ENCODE measurements at regions of chr1 and their contacts with region 1.

Region 1: GRCh38 chr1:162035241-162035640 is 11.6 kb upstream of the OLFML2B start:
- DNase-seq: peak in 2 of 3 donors; percentile 9 to 28
- H3K4me3 ChIP-seq: no peak overlapping the region
- H3K27ac ChIP-seq: no peak overlapping the region
- H3K4me1 ChIP-seq: peaks cover 0 to 8% (median 3%) of the 10 kb centered on the region in 4 experiments
- H3K27me3 ChIP-seq: no peaks in the 10 kb centered on the region

Region 2: GRCh38 chr1:161792740-161793139 is 242.5 kb before region 1 on chr1:
- CTCF ChIA-PET with region 1: interaction called, 144 read pairs
- POLR2A ChIA-PET with region 1: no interaction called
- DNase-seq: peak; percentile 54 to 75 (median 72)
- H3K4me3 ChIP-seq: no peak overlapping the region
- H3K27ac ChIP-seq: no peak overlapping the region
- H3K4me1 ChIP-seq: no peaks in the 10 kb centered on the region
- H3K27me3 ChIP-seq: no peaks in the 10 kb centered on the region

Region 3: GRCh38 chr1:161858271-161858670 is 177.0 kb before region 1 on chr1:
- CTCF ChIA-PET with region 1: interaction called, 35 read pairs
- POLR2A ChIA-PET with region 1: no interaction called
- DNase-seq: no peak
- H3K4me3 ChIP-seq: no peak overlapping the region
- H3K27ac ChIP-seq: no peak overlapping the region
- H3K4me1 ChIP-seq: no peaks in the 10 kb centered on the region
- H3K27me3 ChIP-seq: no peaks in the 10 kb centered on the region

Region 4: DNA sequence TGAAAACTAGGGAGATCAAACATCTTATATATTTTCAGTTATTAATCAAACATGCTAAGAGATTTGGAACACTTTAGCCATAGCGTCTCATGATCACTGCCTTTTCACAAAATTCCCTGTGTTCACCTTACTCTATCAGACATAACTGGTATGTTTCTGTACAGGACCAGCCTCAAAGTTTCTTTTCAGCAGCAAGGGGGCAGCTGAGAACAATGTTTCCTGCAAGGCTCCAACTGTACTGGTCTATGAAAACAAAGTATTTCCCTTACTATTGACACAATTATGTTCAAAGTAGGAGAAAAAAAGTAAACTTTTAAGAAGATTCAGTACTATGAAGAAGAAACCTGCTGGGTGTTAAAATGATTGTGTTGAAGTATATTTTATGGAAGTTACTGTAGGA is 170.7 kb before region 1 on chr1:
- CTCF ChIA-PET with region 1: interaction called, 35 read pairs
- POLR2A ChIA-PET with region 1: no interaction called
- DNase-seq: peak; percentile 27 to 53 (median 51)
- H3K4me3 ChIP-seq: no peak overlapping the region
- H3K27ac ChIP-seq: no peak overlapping the region
- H3K4me1 ChIP-seq: no peaks in the 10 kb centered on the region
- H3K27me3 ChIP-seq: no peaks in the 10 kb centered on the region

Region 5: DNA sequence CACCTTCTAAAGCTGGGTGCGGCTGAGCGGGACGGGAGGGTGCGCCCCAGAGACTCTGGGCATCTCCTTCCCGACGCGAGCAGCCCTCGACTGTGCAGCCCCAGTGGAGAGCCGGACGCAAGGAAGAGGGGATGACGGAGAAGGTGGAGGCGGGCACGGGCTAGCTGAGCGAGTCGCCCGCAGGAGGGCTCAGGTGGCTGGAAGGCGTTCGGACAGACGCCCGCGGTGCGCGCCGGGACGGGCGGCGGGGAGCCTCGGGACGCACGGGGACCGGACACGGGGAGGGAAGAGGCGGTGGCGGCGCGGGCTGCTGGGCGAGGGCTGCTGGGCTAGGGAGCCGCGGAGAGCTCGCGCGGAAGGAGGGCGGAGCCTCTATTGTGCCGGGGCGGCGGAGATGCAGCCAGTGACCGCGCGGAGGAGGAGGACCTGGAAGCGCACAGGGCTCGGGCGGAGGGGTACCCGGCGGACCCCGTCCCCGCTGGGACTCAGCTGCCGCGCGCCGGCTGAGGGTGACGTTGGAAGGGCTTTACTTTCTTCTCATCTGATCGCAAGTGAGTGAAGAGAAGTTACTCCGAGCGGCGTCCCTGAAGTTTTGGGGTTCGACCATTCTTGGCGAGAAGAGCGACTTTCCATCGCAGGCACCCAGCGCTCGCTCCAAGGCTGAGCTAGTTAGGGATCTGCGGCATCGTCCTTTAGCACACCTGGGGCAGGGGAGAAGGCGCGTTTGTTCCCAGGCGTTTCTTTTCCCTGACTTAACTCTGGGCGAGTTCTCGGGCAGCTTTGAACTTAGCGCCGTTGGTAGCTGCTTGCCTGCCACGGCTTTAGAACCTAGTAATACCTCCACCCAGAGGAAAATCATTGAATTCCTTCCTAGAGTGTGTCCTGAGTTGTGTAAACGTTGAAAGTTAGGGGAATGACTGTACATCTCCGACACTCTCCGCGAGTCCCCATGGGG is 11.4 kb before region 1 on chr1 and contains the start of gene OLFML2B:
- CTCF ChIA-PET with region 1: interaction called, 30 read pairs
- POLR2A ChIA-PET with region 1: no interaction called
- DNase-seq: peak; percentile 56 to 69 (median 67)
- H3K4me3 ChIP-seq: peak within 1 kb of the TSS; percentile 46 to 95 (median 83)
- H3K27ac ChIP-seq: no peak within 1 kb of the TSS
- H3K4me1 ChIP-seq: peaks cover 4 to 17% (median 12%) of the 10 kb centered on the region in 4 experiments
- H3K27me3 ChIP-seq: peaks cover 0 to 19% (median 5%) of the 10 kb centered on the region in 5 experiments

Region 6: GRCh38 chr1:162046921-162047320 is 11.7 kb after region 1 on chr1:
- CTCF ChIA-PET with region 1: interaction called, 14 read pairs
- POLR2A ChIA-PET with region 1: interaction called, 3 read pairs
- DNase-seq: no peak
- H3K4me3 ChIP-seq: no peak overlapping the region
- H3K27ac ChIP-seq: no peak overlapping the region
- H3K4me1 ChIP-seq: no peaks in the 10 kb centered on the region
- H3K27me3 ChIP-seq: no peaks in the 10 kb centered on the region

Measured in common myeloid progenitor, CD34-positive (primary cell).